ENCODE measurements at regions of chr4 and their contacts with region 1.

Region 1: GRCh38 chr4:52545099-52546069 is 113.7 kb downstream of the USP46 start:
- DNase-seq: peak; percentile 31 to 55
- ATAC-seq: peak; percentile 81 to 90
- H3K4me3 ChIP-seq: no peak overlapping the region
- H3K27ac ChIP-seq: no peak overlapping the region
- H3K4me1 ChIP-seq: peaks cover 0 to 5% of the 10 kb centered on the region in 2 donors
- H3K27me3 ChIP-seq: no peaks in the 10 kb centered on the region
- CTCF ChIP-seq: peak; percentile 73 to 94 (median 87)
- POLR2A ChIP-seq: no peak

Region 2: GRCh38 chr4:51906167-51906958 is 639.0 kb before region 1 on chr4:
- in situ Hi-C with region 1: no loop called
- intact Hi-C with region 1: no loop called
- DNase-seq: no peak
- ATAC-seq: no peak
- H3K4me3 ChIP-seq: no peak overlapping the region
- H3K27ac ChIP-seq: no peak overlapping the region
- H3K4me1 ChIP-seq: no peaks in the 10 kb centered on the region
- H3K27me3 ChIP-seq: no peaks in the 10 kb centered on the region
- CTCF ChIP-seq: no peak
- POLR2A ChIP-seq: no peak

Region 3: GRCh38 chr4:52665592-52665991 is 120.2 kb after region 1 on chr4:
- in situ Hi-C with region 1: loop called in 1 of 4 experiments (anchors 10 kb)
- intact Hi-C with region 1: loop called (anchors 2 kb)
- DNase-seq: no peak
- ATAC-seq: peak in 1 of 2 donors; percentile 51
- H3K4me3 ChIP-seq: no peak overlapping the region
- H3K27ac ChIP-seq: no peak overlapping the region
- H3K4me1 ChIP-seq: peaks cover 6% of the 10 kb centered on the region in 2 donors
- H3K27me3 ChIP-seq: no peaks in the 10 kb centered on the region
- CTCF ChIP-seq: peak; percentile 22 to 57 (median 48)
- POLR2A ChIP-seq: no peak

Region 4: DNA sequence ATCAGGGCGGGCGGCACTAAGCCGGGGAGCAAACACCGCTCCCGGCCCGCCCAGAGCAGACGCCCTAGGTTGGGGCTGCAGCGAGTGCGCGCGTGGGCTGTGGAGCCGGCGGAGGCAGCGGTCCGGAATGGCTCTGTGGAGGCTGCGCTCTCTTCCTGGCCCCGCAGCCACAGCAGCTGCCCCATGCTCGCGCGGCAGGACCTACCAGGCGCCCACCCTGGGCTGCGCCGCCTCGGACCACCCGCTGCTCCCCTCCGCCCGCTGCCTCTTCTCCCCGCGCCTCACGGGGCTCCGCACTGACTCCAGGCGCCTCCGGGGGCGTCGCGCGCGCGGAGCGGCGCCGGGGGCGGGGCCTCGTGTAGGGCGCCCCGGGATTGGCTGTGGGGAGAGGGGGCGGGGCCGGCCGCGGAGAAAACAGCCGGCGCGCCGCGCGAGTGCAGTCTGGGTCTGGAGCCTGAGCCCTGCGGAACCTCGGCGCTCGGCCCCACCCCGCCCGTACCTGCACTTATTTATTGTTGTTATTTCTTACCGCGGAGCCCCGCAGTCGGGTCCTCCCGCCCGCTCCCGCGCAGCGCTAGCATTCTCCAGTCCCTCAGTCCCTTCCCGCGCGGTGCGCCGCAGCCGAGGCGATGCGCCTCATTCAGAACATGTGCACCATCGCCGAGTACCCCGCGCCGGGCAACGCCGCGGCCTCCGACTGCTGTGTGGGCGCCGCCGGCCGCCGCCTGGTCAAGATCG is 316.7 kb after region 1 on chr4 and contains the start of gene RASL11B:
- in situ Hi-C with region 1: no loop called
- intact Hi-C with region 1: loop called (anchors 5 kb)
- DNase-seq: peak; percentile 53 to 70
- ATAC-seq: peak; percentile 96 to 98
- H3K4me3 ChIP-seq: peak within 1 kb of the TSS; percentile 63 to 80 (median 72)
- H3K27ac ChIP-seq: peak within 1 kb of the TSS; percentile 59 to 72 (median 60)
- H3K4me1 ChIP-seq: peaks cover 4 to 10% of the 10 kb centered on the region in 2 donors
- H3K27me3 ChIP-seq: no peaks in the 10 kb centered on the region
- CTCF ChIP-seq: peak in 3 of 5 experiments; percentile 31 to 64 (median 42)
- POLR2A ChIP-seq: peak; percentile 35 to 74
- total RNA-seq, gene RASL11B: 0.18 TPM in 1 of 4 donors, not detected in the others

Region 5: DNA sequence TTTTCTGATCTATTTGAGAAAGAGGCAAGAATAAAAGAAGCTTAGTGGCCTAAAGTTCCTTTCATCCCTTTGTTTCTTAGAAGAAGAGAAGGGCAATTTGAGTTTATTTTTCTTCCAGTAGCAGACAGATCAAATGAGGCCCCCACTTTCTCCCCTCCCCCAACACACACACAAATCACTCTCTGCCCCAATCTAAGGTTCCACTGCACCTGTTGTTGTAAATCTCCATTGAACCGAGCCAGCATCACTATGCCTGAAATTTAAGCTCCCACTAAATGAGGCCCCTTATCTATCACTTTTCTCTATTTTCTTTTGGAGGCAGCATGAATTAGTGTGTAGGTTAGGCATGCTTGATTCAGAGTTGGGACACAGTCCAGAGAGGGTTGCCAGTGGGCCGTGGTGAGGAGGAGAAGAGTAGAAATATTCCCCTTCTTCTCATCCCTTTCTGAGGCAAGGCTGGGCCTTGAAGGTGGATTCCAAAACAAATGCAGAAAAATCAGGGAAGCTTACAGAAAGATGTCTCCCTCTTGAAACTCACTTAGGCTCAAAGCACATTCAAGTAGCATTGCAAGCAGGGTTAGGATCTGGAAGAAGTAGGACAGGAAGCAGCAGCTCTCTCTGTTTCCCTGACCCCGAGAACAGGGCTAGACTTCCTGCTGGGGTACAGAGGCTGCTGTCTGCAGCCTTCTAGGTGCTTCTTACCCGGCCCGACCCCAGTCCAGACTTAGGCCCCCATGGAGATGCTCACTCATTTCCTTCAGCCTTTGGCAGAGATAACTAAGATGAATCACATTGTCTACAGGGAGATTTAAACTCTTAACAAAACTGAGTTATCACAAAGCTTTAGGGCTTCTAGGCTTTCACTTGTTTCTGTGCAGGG is 387.4 kb after region 1 on chr4:
- in situ Hi-C with region 1: no loop called
- intact Hi-C with region 1: no loop called
- DNase-seq: no peak
- ATAC-seq: no peak
- H3K4me3 ChIP-seq: no peak overlapping the region
- H3K27ac ChIP-seq: no peak overlapping the region
- H3K4me1 ChIP-seq: peaks cover 10 to 17% of the 10 kb centered on the region in 2 donors
- H3K27me3 ChIP-seq: no peaks in the 10 kb centered on the region
- CTCF ChIP-seq: no peak
- POLR2A ChIP-seq: no peak

Measured in gastrocnemius medialis (tissue), 4 donors.